Right ventricle myocardium inferior (tissue), 1 donor: ENCODE measurements at regions of chr2 and their contacts with region 1.

Region 1: DNA sequence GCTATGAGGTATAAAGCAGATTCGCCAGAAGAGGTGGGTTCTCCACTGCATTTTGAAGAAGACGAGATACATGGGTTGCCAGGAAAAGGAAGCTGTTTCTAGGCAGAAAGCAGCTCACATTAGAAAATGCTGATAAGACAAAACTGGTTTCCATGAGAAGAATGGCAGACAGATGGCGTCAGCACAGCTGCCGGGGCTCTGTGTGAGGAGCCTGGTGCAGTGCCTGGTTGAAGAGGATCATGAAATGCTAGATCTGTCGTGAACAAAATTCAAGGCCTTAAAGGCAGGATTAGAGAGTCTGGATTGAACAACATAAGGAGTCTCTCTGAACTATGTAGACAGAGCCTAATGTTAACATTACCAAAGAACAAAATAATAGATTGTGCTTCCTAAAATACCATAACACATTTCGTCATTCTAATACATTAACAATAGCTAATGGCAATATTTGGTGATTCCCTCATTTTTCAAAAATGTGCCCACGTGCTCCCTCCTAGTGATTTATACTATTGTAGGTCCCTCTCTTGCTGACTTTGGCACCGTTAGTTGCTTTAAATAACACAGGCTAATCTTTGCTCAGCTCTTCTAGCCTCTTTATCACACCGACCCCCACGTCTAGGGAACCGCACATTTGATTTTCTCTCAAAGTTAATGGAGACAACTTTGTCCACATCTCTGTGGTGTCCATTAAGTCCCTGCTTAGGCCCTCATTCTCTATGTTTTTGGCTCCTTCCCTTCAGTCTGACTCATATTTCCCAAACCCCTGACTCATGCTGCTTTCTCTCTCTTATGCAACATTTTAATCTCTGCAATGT is 38.2 kb downstream of the EFEMP1 start:
- DNase-seq: no peak
- ATAC-seq: peak; percentile 78

Region 2: DNA sequence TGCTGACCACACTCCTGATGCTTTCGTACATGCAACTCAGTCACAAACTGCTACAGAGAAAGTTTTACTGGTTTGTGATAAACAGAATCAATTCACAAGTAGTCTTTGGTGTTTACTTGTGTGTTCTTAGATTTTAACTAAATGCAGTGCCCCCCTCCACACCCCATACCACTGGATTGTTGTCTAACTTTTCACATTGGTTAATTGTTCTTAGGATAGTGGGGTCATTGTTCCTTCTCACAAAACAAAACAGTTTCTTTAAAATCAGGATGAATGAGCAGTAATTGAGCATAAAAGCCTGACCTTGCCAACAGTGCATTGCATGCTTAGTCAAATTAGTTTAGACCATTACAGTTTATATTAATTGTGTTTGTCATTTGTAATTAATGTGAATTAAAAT is 177.6 kb before region 1 on chr2:
- intact Hi-C with region 1: no loop called
- DNase-seq: no peak
- ATAC-seq: no peak

Region 3: DNA sequence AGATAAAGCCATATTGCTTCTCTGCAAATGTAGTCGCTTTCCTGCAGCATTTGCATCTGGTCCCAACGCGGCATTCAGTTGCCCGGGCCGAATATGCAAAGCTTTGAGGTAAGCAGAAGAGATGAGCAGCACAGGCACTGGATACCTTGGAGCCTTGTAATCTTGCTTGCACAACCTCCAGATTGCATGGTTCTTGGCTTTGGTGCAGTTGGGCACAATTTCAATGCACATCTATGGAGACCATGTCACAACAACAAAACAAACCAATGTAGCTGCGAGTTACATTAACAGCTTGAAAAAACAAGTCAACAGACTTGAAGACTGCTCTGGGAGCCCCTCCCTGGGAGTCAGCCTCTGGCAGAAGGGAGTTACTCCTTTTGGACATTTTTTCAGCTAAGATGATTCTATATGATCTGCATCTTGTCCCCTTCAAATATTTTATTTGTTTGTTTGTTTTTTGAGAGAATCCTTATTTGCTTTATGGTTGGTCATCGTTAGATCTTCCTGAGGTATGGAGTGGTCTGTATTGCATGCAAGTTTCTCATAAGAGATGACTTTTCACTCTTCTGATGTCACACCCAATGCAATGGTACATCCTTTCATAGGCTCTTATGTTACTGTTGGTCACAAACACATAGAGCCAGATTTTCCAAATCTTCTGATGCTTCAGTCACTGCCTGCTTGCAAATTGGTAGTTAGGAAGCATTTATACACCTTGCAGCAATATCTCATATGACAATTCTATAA is 75.3 kb before region 1 on chr2:
- intact Hi-C with region 1: loop called (anchors 10 kb)
- DNase-seq: peak; percentile 45
- ATAC-seq: peak; percentile 83

Region 4: DNA sequence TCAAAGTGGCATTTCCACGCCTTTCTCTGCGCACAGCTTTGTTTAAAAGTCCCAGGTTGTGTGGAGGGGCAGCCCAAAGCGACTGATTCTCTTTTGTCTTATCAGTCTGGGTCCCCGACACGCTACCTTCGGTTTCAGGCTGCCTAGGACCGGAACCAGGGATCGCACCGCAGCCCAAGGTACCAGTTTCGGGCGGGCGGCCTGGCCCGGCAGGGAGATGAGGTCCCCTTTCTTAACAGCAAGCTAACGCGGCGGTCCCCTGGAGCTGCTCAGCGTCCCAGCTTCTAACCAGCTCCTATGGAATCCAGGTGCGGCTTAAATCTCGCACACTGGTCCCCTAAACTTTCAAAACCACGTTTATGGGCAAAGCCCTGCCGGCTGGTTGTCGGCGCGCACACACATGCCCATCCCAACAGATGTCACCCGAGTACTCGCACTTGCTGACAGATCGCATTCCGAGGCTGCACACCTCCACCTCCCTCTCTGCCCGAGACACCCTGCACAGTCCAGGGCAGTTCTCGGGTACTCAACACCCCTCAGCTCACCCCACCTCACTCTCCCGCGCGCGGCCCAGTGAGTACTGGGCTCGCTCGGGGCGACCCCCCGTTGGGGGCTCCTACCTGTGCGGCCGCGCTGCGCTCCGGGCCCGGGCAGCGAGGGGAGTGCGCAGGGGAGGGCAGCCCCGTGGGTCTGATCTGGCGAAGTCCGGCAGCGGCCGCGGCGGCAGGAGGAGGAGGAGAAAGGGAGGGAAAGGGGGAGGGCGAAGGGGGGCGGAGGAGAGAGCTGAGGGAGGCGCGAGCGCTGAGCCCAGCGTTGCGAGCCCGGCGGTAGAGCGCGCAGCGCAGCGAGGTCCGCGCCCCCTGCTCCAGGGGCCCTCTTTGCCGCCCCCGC is 38.0 kb after region 1 on chr2 and contains the start of gene EFEMP1:
- intact Hi-C with region 1: loop called (anchors 5 kb)
- DNase-seq: peak; percentile 78
- ATAC-seq: peak; percentile 95
- total RNA-seq, gene EFEMP1: 75.9 TPM

Region 5: GRCh38 chr2:55954306-55955035 is 69.1 kb after region 1 on chr2:
- intact Hi-C with region 1: loop called (anchors 5 kb)
- DNase-seq: no peak
- ATAC-seq: peak; percentile 62